Activated CD8-positive, alpha-beta memory T cell treated with anti-CD3 and anti-CD28 coated beads, Interleukin-2, amount 10 ng/mL, durations not matched to agents 7 days and 5 days (primary cell): ENCODE measurements at regions of chr20 and their contacts with region 1.

Region 1: DNA sequence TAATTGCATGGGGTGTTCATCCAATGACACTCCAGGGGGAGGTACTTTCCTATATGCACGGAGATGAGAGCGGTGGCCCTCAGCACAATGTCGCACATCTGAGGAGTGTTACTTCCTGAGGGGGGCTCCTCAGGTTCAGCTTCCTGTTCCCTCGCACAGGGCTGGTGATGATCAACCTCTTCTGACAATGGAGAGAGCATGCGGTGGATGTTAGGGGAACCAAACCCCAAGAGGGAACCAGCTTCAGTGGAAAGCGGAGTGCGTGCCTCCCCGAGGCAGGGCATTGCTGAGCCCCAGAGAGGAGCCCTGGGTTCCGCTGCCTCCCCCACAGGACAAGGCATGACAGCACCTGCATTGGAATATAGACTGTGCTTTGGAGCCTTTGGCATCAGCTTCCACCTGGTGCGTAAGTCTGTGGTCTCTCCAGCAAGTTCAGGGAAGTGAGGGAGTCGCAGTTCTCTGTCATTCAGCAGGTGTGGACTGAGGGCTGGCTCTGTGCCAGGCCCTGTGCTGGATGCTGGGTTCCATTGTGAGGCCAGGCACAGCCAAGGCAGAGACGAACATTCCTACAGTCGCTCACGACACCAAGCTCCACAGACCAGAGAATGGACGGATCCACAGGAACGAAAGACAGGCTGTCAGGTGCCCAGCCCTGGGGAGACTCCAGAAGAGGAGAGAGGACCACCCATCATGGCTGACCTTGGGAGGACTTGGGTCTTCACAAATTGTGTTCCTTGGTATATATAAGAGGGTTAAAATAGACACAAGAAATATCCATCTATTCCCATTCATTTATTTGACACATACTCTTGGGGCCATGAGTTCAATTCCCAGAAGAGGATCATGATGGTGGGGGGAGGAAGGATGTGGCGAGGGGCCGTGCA is 3.9 kb upstream of the ZNF831 start:
- DNase-seq: peak; percentile 85
- ATAC-seq: peak; percentile 69
- H3K4me3 Mint-ChIP-seq: peak overlapping the region; percentile 78
- H3K27ac Mint-ChIP-seq: peak overlapping the region; percentile 98
- H3K4me1 Mint-ChIP-seq: peaks cover 59% of the 10 kb centered on the region
- H3K27me3 Mint-ChIP-seq: peaks cover 4% of the 10 kb centered on the region

Region 2: GRCh38 chr20:59177261-59178250 is 17.8 kb after region 1 on chr20:
- CTCF ChIA-PET with region 1: interaction called, 15 read pairs
- DNase-seq: peak; percentile 78
- ATAC-seq: peak; percentile 91
- H3K4me3 Mint-ChIP-seq: peak overlapping the region; percentile 58
- H3K27ac Mint-ChIP-seq: peak overlapping the region; percentile 84
- H3K4me1 Mint-ChIP-seq: peaks cover 73% of the 10 kb centered on the region
- H3K27me3 Mint-ChIP-seq: no peaks in the 10 kb centered on the region

Region 3: DNA sequence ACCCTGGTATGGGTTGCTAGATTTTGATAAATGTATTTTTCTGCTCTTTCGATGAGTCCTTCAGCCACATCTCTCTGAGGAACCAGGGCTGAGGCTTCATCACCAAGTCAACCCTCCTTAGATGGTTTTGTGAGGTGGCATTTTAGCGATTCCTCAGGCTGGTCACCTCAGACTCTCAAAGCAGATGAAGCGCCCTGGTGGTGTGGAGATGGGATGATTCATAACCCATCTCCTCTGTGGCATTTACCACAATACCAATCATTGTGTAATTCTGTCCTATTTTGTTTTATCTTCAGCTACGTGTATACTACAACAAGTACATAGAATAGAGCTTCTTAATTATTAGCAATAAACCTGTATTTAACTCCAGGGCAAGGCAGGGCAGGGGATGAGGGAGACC is 83.0 kb after region 1 on chr20:
- CTCF ChIA-PET with region 1: no interaction called
- DNase-seq: peak; percentile 71
- ATAC-seq: peak; percentile 86
- H3K4me3 Mint-ChIP-seq: no peak overlapping the region
- H3K27ac Mint-ChIP-seq: peak overlapping the region; percentile 49
- H3K4me1 Mint-ChIP-seq: peaks cover 9% of the 10 kb centered on the region
- H3K27me3 Mint-ChIP-seq: peaks cover 13% of the 10 kb centered on the region

Region 4: GRCh38 chr20:59365611-59366285 is 206.0 kb after region 1 on chr20:
- CTCF ChIA-PET with region 1: no interaction called
- DNase-seq: no peak
- ATAC-seq: no peak
- H3K4me3 Mint-ChIP-seq: no peak overlapping the region
- H3K27ac Mint-ChIP-seq: no peak overlapping the region
- H3K4me1 Mint-ChIP-seq: no peaks in the 10 kb centered on the region
- H3K27me3 Mint-ChIP-seq: peaks cover 7% of the 10 kb centered on the region